MCF 10A (cell line): ENCODE measurements at regions of chr1 and their contacts with region 1.

Region 1: GRCh38 chr1:179954493-179955297 is at the start of gene CEP350:
- DNase-seq: peak; percentile 100
- H3K4me3 Mint-ChIP-seq: peak within 1 kb of the TSS; percentile 84
- H3K27ac Mint-ChIP-seq: peak within 1 kb of the TSS; percentile 87
- H3K4me1 Mint-ChIP-seq: peaks cover 14% of the 10 kb centered on the region
- H3K27me3 Mint-ChIP-seq: no peaks in the 10 kb centered on the region
- CTCF ChIP-seq: no peak
- total RNA-seq, gene CEP350: 54.3 and 56.4 TPM in 2 replicates

Region 2: GRCh38 chr1:179882243-179883039 is 72.3 kb before region 1 on chr1 and contains the start of gene TOR1AIP1:
- CTCF ChIA-PET with region 1: interaction called, 3 read pairs
- POLR2A ChIA-PET with region 1: interaction called, 108 read pairs
- intact Hi-C with region 1: loop called (anchors 1 kb)
- DNase-seq: peak; percentile 99
- H3K4me3 Mint-ChIP-seq: peak within 1 kb of the TSS; percentile 93
- H3K27ac Mint-ChIP-seq: peak within 1 kb of the TSS; percentile 100
- H3K4me1 Mint-ChIP-seq: peaks cover 43% of the 10 kb centered on the region
- H3K27me3 Mint-ChIP-seq: no peaks in the 10 kb centered on the region
- CTCF ChIP-seq: peak; percentile 39
- total RNA-seq, gene TOR1AIP1: 52.4 and 53.7 TPM in 2 replicates

Region 3: DNA sequence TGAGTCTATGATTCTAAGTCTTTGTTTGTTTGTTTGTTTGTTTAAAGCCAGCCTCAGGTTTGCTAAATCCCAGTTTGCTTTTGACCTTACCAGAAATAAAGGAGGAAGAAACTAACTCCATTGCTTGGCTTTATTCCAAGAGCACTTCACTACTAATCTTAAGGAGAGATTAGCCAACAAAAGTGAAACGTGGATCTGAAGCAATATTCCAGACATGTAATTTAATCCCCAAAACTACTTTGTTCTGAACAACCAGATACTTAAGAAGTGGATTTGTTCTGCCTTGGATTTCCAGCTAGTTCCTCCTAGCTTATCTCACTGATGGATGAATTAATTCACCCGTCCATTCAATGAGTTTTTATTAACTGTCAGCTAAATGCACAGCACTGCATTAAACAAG is 15.9 kb before region 1 on chr1:
- CTCF ChIA-PET with region 1: interaction called, 4 read pairs
- POLR2A ChIA-PET with region 1: interaction called, 73 read pairs
- intact Hi-C with region 1: no loop called
- DNase-seq: peak; percentile 73
- H3K4me3 Mint-ChIP-seq: no peak overlapping the region
- H3K27ac Mint-ChIP-seq: no peak overlapping the region
- H3K4me1 Mint-ChIP-seq: peaks cover 11% of the 10 kb centered on the region
- H3K27me3 Mint-ChIP-seq: no peaks in the 10 kb centered on the region
- CTCF ChIP-seq: no peak

Region 4: DNA sequence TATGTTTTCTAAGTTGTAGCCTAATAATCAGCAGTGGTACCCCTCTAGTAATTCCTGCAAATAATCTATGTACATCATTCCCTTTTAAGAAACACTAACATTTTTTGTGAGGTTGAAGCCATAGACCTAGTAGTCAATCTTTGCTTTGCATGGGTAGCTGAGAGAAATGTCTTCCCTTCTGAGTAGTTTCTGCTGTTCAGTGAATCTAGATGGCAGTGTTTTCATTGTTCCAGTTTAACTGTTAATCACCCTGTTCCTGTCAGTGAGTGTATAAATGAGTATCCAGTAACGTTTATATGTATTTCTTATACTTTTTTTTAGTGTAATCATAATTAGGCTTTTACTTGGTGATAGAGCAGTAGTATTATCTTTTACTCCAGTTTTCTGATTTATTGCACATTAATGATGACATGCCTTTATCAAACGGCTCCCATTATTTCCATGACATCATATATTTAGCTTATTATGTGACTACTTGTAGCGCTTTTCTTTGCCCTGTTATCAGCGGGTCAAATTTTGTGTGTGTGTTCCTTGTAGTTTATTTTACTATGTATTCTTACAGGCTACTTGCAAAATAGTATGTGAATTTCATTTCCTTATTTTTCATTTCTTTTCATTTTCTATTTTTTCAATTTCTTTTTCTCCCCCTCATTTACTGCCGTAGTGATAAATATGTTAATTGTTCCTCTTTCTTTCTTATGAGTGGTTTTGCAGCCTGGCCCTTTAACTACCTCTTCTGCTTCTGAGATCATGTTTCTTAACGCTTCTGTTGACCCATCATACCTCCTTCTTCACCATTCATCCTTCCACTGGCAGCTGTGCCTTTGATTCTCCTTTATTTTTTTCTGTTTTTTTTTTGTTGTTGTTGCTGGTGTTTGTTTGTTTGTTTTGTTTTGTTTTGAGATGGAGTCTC is 18.8 kb after region 1 on chr1:
- CTCF ChIA-PET with region 1: interaction called, 5 read pairs
- POLR2A ChIA-PET with region 1: interaction called, 22 read pairs
- intact Hi-C with region 1: no loop called
- DNase-seq: no peak
- H3K4me3 Mint-ChIP-seq: no peak overlapping the region
- H3K27ac Mint-ChIP-seq: no peak overlapping the region
- H3K4me1 Mint-ChIP-seq: peaks cover 37% of the 10 kb centered on the region
- H3K27me3 Mint-ChIP-seq: no peaks in the 10 kb centered on the region
- CTCF ChIP-seq: no peak

Region 5: DNA sequence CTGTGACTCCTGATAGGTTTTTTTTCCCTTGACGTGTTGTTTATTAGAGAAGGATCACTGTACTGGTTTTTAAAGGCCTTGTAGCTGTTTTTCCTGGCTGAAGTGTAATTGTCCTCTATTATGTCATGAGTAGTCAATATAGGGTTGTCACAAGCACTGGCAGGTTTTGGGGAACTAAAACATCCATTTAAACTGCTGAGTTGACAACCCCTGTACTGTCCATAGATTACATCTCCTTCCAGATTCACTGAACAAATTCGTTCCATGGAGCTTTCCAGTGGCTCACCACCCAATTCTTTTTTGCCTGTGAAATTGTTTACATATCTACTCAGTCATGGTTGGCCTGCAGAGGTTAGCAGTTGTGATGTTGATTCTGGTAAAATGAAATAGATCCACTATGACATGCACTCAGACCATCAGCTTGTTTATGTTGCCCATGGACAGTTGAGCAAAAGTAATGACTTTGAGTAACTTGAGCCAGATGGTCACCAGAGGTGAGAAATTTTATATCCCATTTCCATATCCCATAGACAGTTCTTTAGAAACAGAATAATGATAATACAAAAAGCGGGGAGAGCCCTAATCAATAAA is 140.1 kb after region 1 on chr1:
- CTCF ChIA-PET with region 1: no interaction called
- POLR2A ChIA-PET with region 1: no interaction called
- intact Hi-C with region 1: no loop called
- DNase-seq: no peak
- H3K4me3 Mint-ChIP-seq: no peak overlapping the region
- H3K27ac Mint-ChIP-seq: no peak overlapping the region
- H3K4me1 Mint-ChIP-seq: peaks cover 16% of the 10 kb centered on the region
- H3K27me3 Mint-ChIP-seq: no peaks in the 10 kb centered on the region
- CTCF ChIP-seq: no peak

Region 6: GRCh38 chr1:180154325-180155181 is 199.9 kb after region 1 on chr1 and contains the start of gene QSOX1:
- CTCF ChIA-PET with region 1: no interaction called
- POLR2A ChIA-PET with region 1: interaction called, 5 read pairs
- intact Hi-C with region 1: loop called (anchors 2 kb)
- DNase-seq: peak; percentile 92
- H3K4me3 Mint-ChIP-seq: peak within 1 kb of the TSS; percentile 98
- H3K27ac Mint-ChIP-seq: peak within 1 kb of the TSS; percentile 89
- H3K4me1 Mint-ChIP-seq: peaks cover 64% of the 10 kb centered on the region
- H3K27me3 Mint-ChIP-seq: no peaks in the 10 kb centered on the region
- CTCF ChIP-seq: peak; percentile 23
- total RNA-seq, gene QSOX1: 309 and 464 TPM in 2 replicates

Region 7: DNA sequence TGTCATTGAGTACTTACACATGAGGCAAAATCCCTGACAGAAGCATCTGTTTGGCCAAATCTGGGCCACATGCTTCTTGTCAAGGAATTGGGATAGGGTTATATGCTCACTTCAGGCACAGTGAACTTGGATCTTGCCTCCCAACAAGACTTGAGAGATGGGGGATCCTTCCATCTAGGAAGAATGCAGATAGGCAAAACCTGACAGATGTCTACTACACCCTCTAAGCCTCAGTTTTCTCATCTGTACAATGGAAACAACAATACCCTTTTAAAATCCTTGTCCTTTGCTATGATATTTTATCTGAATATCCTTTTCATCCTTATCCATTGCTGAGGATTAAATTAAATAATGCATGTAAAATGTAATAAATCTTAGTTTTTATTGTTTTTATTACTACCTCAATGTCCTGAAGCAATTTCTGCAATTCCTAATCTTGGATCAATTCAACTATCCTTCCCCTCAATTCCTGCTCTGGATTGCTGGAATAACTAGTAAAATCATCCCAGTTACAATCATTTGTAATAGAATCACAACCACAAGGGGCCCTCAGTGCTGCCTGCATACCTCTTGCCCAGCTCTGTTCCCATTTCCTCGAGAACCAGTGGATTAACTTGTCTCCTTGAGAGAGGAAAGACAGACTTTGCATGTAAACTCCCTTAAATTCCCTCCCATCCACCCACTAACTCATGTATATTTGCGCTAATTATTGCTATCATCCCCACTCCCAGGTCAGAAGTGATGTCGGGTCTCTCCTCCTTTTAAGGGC is 669.1 kb after region 1 on chr1:
- CTCF ChIA-PET with region 1: no interaction called
- POLR2A ChIA-PET with region 1: no interaction called
- intact Hi-C with region 1: no loop called
- DNase-seq: peak; percentile 28
- H3K4me3 Mint-ChIP-seq: no peak overlapping the region
- H3K27ac Mint-ChIP-seq: no peak overlapping the region
- H3K4me1 Mint-ChIP-seq: no peaks in the 10 kb centered on the region
- H3K27me3 Mint-ChIP-seq: peaks cover 11% of the 10 kb centered on the region
- CTCF ChIP-seq: no peak